ENCODE measurements at regions of chr10 and their contacts with region 1.

Region 1: GRCh38 chr10:6491841-6492609 is 88.1 kb downstream of the PRKCQ start:
- DNase-seq: peak; percentile 59
- H3K4me3 Mint-ChIP-seq: peak overlapping the region; percentile 68
- H3K27ac Mint-ChIP-seq: peak overlapping the region; percentile 91
- H3K4me1 Mint-ChIP-seq: peaks cover 31% of the 10 kb centered on the region
- H3K27me3 Mint-ChIP-seq: no peaks in the 10 kb centered on the region

Region 2: DNA sequence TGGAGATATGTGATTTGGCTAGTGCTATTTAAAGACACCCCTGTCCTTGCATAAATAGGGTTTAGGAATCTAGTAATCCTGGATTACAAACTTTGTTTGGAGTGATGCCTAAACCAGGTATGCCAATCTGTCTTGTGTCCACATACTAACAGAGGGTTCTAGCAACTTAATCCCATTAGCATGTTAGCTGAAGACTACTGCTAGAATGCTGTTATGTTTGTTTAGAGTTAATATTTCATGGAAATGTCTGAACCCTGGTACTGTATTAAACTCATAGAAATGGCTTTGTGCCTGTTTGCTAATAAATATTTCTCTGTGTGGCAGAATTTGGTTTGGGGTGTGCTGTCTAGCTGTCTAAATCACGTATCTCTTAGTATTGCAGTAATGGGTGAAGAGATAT is 138.5 kb before region 1 on chr10:
- CTCF ChIA-PET with region 1: no interaction called
- intact Hi-C with region 1: no loop called
- DNase-seq: no peak
- H3K4me3 Mint-ChIP-seq: no peak overlapping the region
- H3K27ac Mint-ChIP-seq: no peak overlapping the region
- H3K4me1 Mint-ChIP-seq: peaks cover 20% of the 10 kb centered on the region
- H3K27me3 Mint-ChIP-seq: no peaks in the 10 kb centered on the region

Region 3: DNA sequence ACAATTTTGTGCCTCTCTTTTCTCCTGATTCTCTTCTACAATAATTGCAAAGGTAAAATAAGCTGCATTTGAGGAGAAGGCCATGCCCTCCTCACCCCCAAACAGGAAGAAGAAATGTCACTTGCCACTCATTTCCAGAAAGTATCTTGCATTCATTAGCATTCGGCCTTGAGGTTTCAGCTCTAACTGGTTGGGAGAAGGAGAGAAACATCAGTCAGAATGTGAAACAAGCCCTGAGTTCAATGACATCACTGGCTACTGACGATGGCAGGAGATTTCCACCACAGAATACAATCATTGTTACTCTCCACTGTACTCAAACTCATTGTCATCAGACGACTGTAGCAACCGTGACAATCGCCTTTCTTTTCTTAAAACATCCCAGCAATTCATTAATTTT is 15.3 kb after region 1 on chr10:
- CTCF ChIA-PET with region 1: interaction called, 3 read pairs
- intact Hi-C with region 1: loop called (anchors 1 kb)
- DNase-seq: peak; percentile 80
- H3K4me3 Mint-ChIP-seq: peak overlapping the region; percentile 7
- H3K27ac Mint-ChIP-seq: peak overlapping the region; percentile 90
- H3K4me1 Mint-ChIP-seq: peaks cover 73% of the 10 kb centered on the region
- H3K27me3 Mint-ChIP-seq: no peaks in the 10 kb centered on the region

Measured in activated naive CD4-positive, alpha-beta T cell treated with anti-CD3 and anti-CD28 coated beads for 36 hours (primary cell).